ENCODE measurements at regions of chr3 and their contacts with region 1.

Region 1: GRCh38 chr3:97105989-97106651 is 291.7 kb downstream of the EPHA6 start:
- DNase-seq: no peak
- H3K4me3 ChIP-seq: no peak overlapping the region
- H3K27ac ChIP-seq: no peak overlapping the region
- H3K4me1 ChIP-seq: no peaks in the 10 kb centered on the region
- H3K27me3 ChIP-seq: no peaks in the 10 kb centered on the region
- CTCF ChIP-seq: no peak
- EP300 ChIP-seq: no peak
- POLR2A ChIP-seq: no peak

Region 2: GRCh38 chr3:96852856-96853255 is 253.3 kb before region 1 on chr3:
- intact Hi-C with region 1: loop called in 1 of 4 experiments (anchors 5 kb)
- DNase-seq: no peak
- H3K4me3 ChIP-seq: no peak overlapping the region
- H3K27ac ChIP-seq: no peak overlapping the region
- H3K4me1 ChIP-seq: no peaks in the 10 kb centered on the region
- H3K27me3 ChIP-seq: no peaks in the 10 kb centered on the region
- CTCF ChIP-seq: no peak
- EP300 ChIP-seq: no peak
- POLR2A ChIP-seq: no peak

Measured in ovary (tissue), 10 donors.